ENCODE measurements at regions of chr20 and their contacts with region 1.

Region 1: GRCh38 chr20:44210422-44211176 is at the start of gene OSER1:
- DNase-seq: peak; percentile 95 to 99 (median 97)

Region 2: DNA sequence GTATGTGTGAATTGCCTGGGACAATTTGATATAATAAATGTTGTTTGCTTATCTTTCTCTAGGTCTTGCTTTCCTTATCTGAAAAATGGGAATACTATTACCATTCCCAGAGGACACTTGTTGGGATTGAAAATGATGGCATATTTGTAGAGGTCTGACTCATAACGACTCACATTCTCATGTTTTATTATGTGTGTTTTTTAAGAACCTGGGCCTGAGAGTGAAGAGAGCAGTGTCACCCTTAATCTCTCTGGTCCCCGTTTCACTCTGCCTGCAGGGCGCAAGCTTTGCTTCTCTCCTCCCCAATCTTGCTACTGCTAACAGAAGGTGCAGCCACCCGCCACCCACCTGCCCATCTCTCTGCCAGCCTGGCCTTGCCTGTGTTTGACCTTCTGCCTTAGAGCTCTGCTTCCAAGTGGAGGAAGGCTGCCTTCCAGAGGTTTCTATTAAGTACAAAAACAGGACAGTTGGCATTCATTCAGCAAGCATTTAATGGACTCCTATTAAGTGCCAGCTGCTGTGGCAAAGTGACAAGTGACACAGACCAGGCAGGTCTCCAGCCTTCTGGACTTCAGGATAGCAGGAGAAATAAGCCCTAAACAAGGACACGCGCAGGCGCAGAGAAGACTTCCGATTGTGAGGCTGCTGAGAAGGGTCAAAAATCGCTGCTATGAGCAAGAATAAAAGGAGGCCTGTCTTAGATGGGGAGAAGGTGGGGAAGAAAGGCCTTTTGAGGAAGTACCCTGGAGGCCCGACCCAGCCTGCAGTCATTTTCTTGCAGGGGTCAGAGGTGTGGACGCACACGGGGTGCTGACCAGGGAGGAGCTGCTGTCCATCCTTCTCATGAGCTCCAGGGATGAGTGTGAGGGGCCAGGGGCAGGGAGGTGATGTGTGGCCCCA is 136.1 kb before region 1 on chr20:
- intact Hi-C with region 1: no loop called
- DNase-seq: peak in 22 of 42 donors; percentile 8 to 67 (median 42)

Region 3: DNA sequence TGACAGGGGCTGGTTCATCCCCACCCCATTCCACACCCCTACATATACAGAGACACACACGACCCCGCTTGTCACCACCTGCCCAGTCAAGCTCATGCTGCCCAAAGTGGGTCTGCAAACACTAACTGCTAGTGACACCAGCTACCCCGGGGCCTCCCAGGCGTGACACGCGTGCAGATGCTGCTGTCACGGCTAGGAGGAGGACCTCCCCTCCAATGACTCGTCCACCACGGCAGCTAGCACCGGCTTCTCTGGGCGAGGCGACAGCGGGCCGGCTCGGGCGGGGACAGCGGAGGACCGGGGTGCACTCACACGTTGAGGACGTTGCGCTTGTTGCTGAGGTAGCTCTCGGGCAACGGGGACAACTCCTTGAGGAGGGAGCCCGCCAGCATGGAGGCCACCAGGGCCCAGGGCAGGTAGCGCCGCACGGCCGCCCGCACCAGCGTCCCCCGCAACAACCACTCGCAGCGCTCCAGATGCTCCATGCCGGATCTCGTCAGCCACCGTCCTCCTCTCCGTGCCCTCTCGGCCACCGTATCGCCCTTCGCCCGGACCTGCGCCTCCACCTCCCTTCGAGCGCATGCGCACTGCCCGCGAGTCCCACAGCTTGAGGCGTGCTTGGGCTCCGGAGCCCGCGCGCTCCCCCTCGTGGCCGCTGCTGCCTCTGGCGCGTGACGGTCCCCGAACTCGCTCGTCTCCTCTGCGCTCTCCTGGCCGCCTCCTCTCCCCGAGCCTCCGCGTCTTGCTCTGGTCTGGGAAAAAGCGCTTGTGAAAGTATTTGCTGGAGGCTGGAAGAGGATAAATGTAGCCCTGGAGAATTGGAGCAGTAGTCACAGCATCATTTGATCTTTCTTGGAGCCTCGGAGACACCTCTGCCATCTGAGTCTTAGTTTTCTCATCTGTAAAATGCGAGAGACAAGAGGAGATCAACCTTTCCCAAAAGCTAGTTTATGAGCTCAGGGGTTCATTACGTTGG is 100.4 kb after region 1 on chr20 and contains the start of gene FITM2:
- intact Hi-C with region 1: loop called (anchors 2 kb)
- DNase-seq: peak; percentile 91 to 100 (median 98)

Region 4: GRCh38 chr20:44448753-44449546 is 238.4 kb after region 1 on chr20:
- intact Hi-C with region 1: no loop called
- DNase-seq: no peak